Astrocyte of the cerebellum (primary cell): ENCODE measurements at regions of chr11 and their contacts with region 1.

Region 1: GRCh38 chr11:2940559-2940929 is 11.3 kb upstream of the PHLDA2 start:
- DNase-seq: no peak
- H3K4me3 ChIP-seq: no peak overlapping the region
- CTCF ChIP-seq: no peak

Region 2: GRCh38 chr11:2599561-2600182 is 340.9 kb before region 1 on chr11:
- in situ Hi-C with region 1: no loop called
- DNase-seq: no peak
- H3K4me3 ChIP-seq: no peak overlapping the region
- CTCF ChIP-seq: no peak

Region 3: DNA sequence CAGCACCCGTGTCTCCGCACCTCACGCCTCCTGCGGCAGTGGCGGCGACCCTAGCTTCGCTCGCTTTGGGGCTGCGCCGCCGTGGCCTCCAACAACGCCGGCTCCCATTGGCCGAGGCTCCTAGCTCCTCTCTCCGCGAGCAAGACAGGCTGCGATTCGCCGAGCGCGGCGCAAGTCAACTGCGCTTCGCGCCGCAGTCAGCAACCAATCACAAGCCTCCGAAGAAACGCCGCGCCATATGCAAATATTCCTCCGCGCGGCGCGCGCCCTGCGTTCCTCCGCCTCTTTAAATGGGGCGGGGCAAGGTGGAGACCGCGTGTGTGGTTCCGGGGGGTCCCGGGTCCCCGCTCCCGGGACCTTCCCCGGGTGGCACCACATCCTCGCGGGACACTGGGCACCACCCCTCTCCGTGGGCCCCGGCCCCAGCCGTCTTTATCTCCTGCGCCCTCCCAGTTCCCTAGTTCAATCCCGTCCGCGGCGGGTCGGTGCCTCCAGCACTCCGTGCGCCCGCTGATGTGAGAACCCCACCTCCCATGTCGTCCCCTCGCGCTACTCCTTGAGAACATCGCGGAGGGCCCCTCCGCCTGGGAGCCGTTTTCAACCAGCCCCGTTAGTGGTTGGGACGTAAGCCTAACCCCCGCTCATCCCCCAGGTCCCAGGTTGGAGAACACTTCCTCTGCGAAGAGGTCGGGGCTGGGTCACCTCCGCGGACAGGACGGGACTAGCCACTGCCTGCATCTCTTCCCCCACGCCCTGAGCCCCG is 51.9 kb after region 1 on chr11 and contains the start of gene NAP1L4:
- in situ Hi-C with region 1: loop called (anchors 5 kb)
- DNase-seq: peak; percentile 89
- H3K4me3 ChIP-seq: peak within 1 kb of the TSS; percentile 92
- CTCF ChIP-seq: no peak